Activated B cell treated with CpG ODN at 0.5 μM for 24 hours (primary cell): ENCODE measurements at regions of chr4 and their contacts with region 1.

Region 1: GRCh38 chr4:41692717-41693345 is 55.7 kb downstream of the PHOX2B start:
- DNase-seq: no peak
- ATAC-seq: no peak
- H3K4me3 Mint-ChIP-seq: no peak overlapping the region
- H3K27ac Mint-ChIP-seq: no peak overlapping the region
- H3K4me1 Mint-ChIP-seq: no peaks in the 10 kb centered on the region
- H3K27me3 Mint-ChIP-seq: peaks cover 3% of the 10 kb centered on the region
- CTCF ChIP-seq: no peak

Region 2: DNA sequence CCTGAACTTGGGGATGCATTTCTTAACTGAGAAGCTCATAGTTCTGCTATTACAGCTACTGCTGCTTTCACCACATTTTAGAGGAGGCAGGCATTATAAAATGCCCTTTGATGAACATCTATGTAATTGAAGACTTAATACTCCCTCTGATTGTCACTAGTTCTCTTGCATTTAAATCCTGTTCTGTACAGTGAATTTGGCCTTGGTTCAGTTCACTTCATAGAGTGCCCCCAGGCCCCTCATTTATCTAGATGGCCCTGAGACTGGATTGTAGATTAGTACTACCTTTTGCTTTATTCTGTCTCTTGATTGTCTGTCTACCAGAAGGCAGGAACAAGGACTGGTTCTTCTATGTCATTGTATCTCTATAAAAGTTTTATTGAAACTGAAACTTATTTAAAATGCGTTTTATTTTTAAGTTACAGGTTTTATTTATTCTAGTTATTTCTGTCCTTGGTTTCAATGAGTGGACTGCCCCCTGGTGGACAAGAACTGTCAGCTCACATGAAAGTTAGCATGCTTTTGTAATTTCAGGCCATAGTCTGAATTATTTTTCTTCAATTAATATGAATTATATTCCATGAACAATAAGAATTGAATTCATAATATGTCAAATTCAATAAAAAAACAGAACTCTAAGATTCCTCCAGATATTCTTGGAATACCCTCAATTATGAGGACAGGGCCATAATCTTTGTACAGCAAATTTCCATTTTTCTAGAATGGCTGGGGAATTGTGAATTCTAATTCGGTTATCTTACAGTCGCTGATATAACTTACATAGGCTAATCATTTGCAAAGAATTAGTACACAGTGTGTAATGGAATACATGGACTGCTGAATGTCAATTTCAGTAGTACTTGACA is 195.2 kb after region 1 on chr4:
- CTCF ChIA-PET with region 1: interaction called, 3 read pairs
- POLR2A ChIA-PET with region 1: no interaction called
- intact Hi-C with region 1: loop called (anchors 1 kb)
- DNase-seq: no peak
- ATAC-seq: no peak
- H3K4me3 Mint-ChIP-seq: no peak overlapping the region
- H3K27ac Mint-ChIP-seq: no peak overlapping the region
- H3K4me1 Mint-ChIP-seq: peaks cover under 1% of the 10 kb centered on the region
- H3K27me3 Mint-ChIP-seq: peaks cover 33% of the 10 kb centered on the region
- CTCF ChIP-seq: peak; percentile 100